HCT116 (cell line): ENCODE measurements at regions of chr1 and their contacts with region 1.

Region 1: DNA sequence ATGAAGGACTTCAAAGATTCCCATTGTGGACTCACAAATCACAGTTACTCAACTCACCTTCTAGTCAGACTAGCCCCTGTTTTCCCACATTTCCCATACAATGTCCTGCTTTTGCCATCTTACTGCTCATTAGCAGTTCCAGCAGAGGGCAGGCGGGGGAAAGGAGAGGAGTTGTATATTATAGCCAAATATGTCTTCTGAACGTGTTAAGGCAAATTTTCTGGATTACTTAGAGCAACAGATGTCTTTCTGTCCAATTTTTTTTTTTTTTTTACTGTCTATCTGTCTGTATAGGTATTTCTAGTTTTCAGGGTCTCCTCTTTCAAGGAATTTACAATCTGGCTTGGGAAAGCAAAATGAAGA is 29.9 kb upstream of the DDAH1 start:
- DNase-seq: peak; percentile 12
- ATAC-seq: peak; percentile 81
- H3K4me3 ChIP-seq: peak overlapping the region in 1 of 2 experiments; percentile 27; a peak in 1 of 4 replicates
- H3K27ac ChIP-seq: no peak overlapping the region
- H3K4me1 ChIP-seq: peaks cover 5 to 21% of the 10 kb centered on the region in 2 experiments
- H3K27me3 ChIP-seq: no peaks in the 10 kb centered on the region
- CTCF ChIP-seq: peak; percentile 33 to 55 (median 38); a peak in 5 of 6 replicates
- POLR2A ChIP-seq: no peak
- RAD21 ChIP-seq: peak; percentile 64

Region 2: GRCh38 chr1:85454214-85454613 is 40.7 kb before region 1 on chr1:
- CTCF ChIA-PET with region 1: no interaction called
- POLR2A ChIA-PET with region 1: no interaction called
- RAD21 ChIA-PET with region 1: no interaction called
- intact Hi-C with region 1: no loop called
- DNase-seq: no peak
- ATAC-seq: no peak
- H3K4me3 ChIP-seq: no peak overlapping the region
- H3K27ac ChIP-seq: no peak overlapping the region
- H3K4me1 ChIP-seq: peaks cover 19 to 29% of the 10 kb centered on the region in 2 experiments
- H3K27me3 ChIP-seq: no peaks in the 10 kb centered on the region
- CTCF ChIP-seq: no peak
- POLR2A ChIP-seq: no peak
- RAD21 ChIP-seq: no peak

Region 3: GRCh38 chr1:85681087-85681486 is 186.2 kb after region 1 on chr1:
- CTCF ChIA-PET with region 1: no interaction called
- POLR2A ChIA-PET with region 1: no interaction called
- RAD21 ChIA-PET with region 1: no interaction called
- intact Hi-C with region 1: no loop called
- DNase-seq: no peak
- ATAC-seq: no peak
- H3K4me3 ChIP-seq: no peak overlapping the region
- H3K27ac ChIP-seq: no peak overlapping the region
- H3K4me1 ChIP-seq: no peaks in the 10 kb centered on the region
- H3K27me3 ChIP-seq: no peaks in the 10 kb centered on the region
- CTCF ChIP-seq: no peak
- POLR2A ChIP-seq: no peak
- RAD21 ChIP-seq: no peak

Region 4: DNA sequence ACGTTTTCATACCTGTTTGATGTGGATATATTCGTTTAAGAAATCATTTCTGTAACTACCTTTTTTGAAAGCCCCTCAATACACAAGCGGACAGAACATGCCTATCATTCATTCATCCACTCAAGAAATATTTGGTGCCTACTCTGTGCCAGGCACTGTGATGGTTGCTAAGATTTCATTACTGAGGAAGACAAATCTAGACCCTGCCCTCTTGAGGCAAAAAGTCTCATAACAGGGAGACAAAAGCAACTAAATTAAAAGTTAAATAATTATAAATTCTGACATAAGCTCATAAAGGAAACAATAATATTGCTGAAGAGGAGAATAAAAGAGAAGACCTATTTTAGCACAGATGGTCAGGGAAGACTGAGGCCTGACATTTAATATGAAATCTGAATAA is 416.9 kb after region 1 on chr1:
- CTCF ChIA-PET with region 1: no interaction called
- POLR2A ChIA-PET with region 1: no interaction called
- RAD21 ChIA-PET with region 1: no interaction called
- intact Hi-C with region 1: loop called (anchors 10 kb)
- DNase-seq: peak; percentile 16
- ATAC-seq: peak; percentile 77
- H3K4me3 ChIP-seq: no peak overlapping the region
- H3K27ac ChIP-seq: no peak overlapping the region
- H3K4me1 ChIP-seq: no peaks in the 10 kb centered on the region
- H3K27me3 ChIP-seq: no peaks in the 10 kb centered on the region
- CTCF ChIP-seq: peak; percentile 45 to 52 (median 51); a peak in 5 of 6 replicates
- POLR2A ChIP-seq: no peak
- RAD21 ChIP-seq: peak; percentile 53